Stomach (tissue), 19 donors: ENCODE measurements at regions of chr10 and their contacts with region 1.

Region 1: GRCh38 chr10:109883859-109884771 is 39.2 kb downstream of the XPNPEP1 start:
- DNase-seq: peak; percentile 58 to 96
- H3K4me3 ChIP-seq: peak overlapping the region in 1 of 4 donors; percentile 9
- H3K27ac ChIP-seq: peak overlapping the region in 4 of 5 donors; percentile 11 to 72 (median 44)
- H3K4me1 ChIP-seq: peaks cover 0 to 20% (median 9%) of the 10 kb centered on the region in 4 donors
- H3K27me3 ChIP-seq: no peaks in the 10 kb centered on the region
- CTCF ChIP-seq: peak in 6 of 7 experiments; percentile 38 to 96 (median 90)
- EP300 ChIP-seq: no peak
- POLR2A ChIP-seq: no peak

Region 2: GRCh38 chr10:110016039-110016438 is 131.9 kb after region 1 on chr10:
- intact Hi-C with region 1: loop called (anchors 10 kb)
- DNase-seq: peak in 1 of 2 donors; percentile 62
- H3K4me3 ChIP-seq: no peak overlapping the region
- H3K27ac ChIP-seq: peak overlapping the region in 3 of 5 donors; percentile 11 to 15 (median 12)
- H3K4me1 ChIP-seq: peaks cover under 1 to 67% (median 53%) of the 10 kb centered on the region in 4 donors
- H3K27me3 ChIP-seq: no peaks in the 10 kb centered on the region
- CTCF ChIP-seq: peak in 3 of 7 experiments; percentile 30 to 41 (median 32)
- EP300 ChIP-seq: no peak
- POLR2A ChIP-seq: no peak

Region 3: GRCh38 chr10:110279407-110279986 is 395.4 kb after region 1 on chr10:
- intact Hi-C with region 1: loop called (anchors 10 kb)
- DNase-seq: peak; percentile 60 to 89
- H3K4me3 ChIP-seq: no peak overlapping the region
- H3K27ac ChIP-seq: peak overlapping the region in 2 of 5 donors; percentile 16 to 21
- H3K4me1 ChIP-seq: peaks cover 0 to 27% (median 7%) of the 10 kb centered on the region in 4 donors
- H3K27me3 ChIP-seq: no peaks in the 10 kb centered on the region
- CTCF ChIP-seq: peak in 5 of 7 experiments; percentile 50 to 83 (median 75)
- EP300 ChIP-seq: no peak
- POLR2A ChIP-seq: no peak